ENCODE measurements at regions of chr12 and their contacts with region 1.

Region 1: GRCh38 chr12:79069009-79069408 is 204.4 kb downstream of the SYT1 start:
- DNase-seq: no peak
- H3K4me3 ChIP-seq: no peak overlapping the region
- H3K27ac ChIP-seq: no peak overlapping the region
- H3K4me1 ChIP-seq: no peaks in the 10 kb centered on the region
- CTCF ChIP-seq: no peak

Region 2: GRCh38 chr12:78530100-78530765 is 538.8 kb before region 1 on chr12:
- CTCF ChIA-PET with region 1: no interaction called
- POLR2A ChIA-PET with region 1: interaction called, 10 read pairs
- intact Hi-C with region 1: no loop called
- DNase-seq: no peak
- H3K4me3 ChIP-seq: no peak overlapping the region
- H3K27ac ChIP-seq: no peak overlapping the region
- H3K4me1 ChIP-seq: no peaks in the 10 kb centered on the region
- CTCF ChIP-seq: no peak

Region 3: DNA sequence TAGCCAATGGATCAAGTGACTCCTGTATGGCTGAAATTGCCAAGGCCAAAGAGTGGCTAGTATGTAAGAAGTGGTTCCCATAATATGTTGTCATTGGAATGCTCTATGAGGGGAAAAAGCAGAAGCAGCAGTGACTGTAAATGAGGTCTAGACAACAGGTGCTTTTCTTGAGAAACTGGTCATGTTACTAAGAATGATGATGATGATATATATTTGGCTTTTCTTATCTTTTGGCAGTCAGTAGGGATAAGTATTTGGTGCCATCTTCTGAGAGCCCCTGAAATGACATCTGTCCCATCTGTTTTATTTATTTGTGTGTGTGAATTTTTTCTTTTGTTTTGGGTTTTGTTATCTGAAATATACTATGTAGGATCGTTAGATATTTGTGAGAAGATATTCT is 62.7 kb before region 1 on chr12:
- CTCF ChIA-PET with region 1: no interaction called
- POLR2A ChIA-PET with region 1: no interaction called
- intact Hi-C with region 1: no loop called
- DNase-seq: no peak
- H3K4me3 ChIP-seq: no peak overlapping the region
- H3K27ac ChIP-seq: no peak overlapping the region
- H3K4me1 ChIP-seq: no peaks in the 10 kb centered on the region
- CTCF ChIP-seq: peak; percentile 54